ENCODE measurements at regions of chr4 and their contacts with region 1.

Region 1: GRCh38 chr4:78056265-78057129 is 626 bp upstream of the FRAS1 start:
- DNase-seq: peak; percentile 70 to 89 (median 82)
- ATAC-seq: peak; percentile 81 to 84 (median 82)
- H3K4me3 ChIP-seq: peak overlapping the region; percentile 49 to 82 (median 67)
- H3K27ac ChIP-seq: peak overlapping the region in 11 of 12 donors; percentile 19 to 91 (median 87)
- H3K4me1 ChIP-seq: peaks cover 0 to 29% (median 3%) of the 10 kb centered on the region in 12 donors
- H3K27me3 ChIP-seq: peaks cover 0 to 47% (median 0%) of the 10 kb centered on the region in 9 donors
- CTCF ChIP-seq: peak in 2 of 12 donors; percentile 12 to 19
- POLR2A ChIP-seq: peak in 1 of 2 donors; percentile 37

Region 2: DNA sequence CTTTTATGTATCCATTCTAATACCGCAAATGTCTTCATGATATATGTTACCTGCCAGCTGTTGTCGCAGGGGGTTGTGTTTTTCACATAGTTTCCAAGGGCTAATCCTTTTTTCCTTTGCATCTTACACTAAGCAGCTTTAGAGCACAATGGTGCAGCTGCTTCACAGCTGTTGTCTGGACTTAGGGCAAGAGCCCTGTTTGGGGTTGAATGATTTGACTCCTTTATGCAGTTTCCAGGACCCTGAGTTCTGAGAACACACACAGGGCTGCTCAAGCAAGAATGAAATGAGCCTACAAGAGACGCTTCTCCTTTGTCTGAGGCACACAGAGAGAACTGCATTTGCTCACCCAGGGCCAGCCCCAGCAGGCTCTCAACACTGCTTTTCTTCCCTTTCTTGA is 879.3 kb before region 1 on chr4:
- intact Hi-C with region 1: no loop called
- DNase-seq: no peak
- ATAC-seq: peak in 2 of 4 donors; percentile 29 to 48
- H3K4me3 ChIP-seq: no peak overlapping the region
- H3K27ac ChIP-seq: no peak overlapping the region
- H3K4me1 ChIP-seq: no peaks in the 10 kb centered on the region
- H3K27me3 ChIP-seq: no peaks in the 10 kb centered on the region
- CTCF ChIP-seq: no peak
- POLR2A ChIP-seq: no peak

Region 3: DNA sequence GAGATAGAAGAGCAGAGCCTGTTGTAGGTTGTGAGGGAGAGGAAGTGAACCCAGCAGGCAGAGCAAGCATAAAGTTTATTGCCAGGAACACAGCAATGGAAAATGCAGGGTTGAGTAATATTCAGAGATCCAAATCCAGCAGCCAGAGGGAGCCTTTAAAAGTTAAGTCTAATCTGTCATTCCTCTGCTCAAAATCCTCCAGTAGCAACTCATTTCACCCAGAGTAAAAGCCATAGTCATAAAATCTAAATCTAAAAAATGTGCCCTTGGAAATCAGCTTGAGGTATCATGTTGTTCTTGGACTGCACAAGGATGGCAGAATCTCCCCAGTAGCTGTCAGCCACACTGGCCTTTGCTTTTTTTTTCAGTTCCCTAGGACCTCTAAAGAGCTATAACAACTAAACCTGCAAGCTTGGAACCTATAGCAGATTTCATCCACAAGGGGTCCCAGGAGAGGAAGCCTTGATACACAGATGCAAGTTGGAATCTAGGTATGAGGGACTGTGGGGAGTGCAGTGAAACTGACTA is 62.2 kb before region 1 on chr4:
- intact Hi-C with region 1: loop called in 1 of 10 experiments (anchors 10 kb)
- DNase-seq: peak in 2 of 5 donors; percentile 10 to 24
- ATAC-seq: peak in 3 of 4 donors; percentile 70 to 75 (median 74)
- H3K4me3 ChIP-seq: no peak overlapping the region
- H3K27ac ChIP-seq: no peak overlapping the region
- H3K4me1 ChIP-seq: peaks cover 0 to 3% (median 0%) of the 10 kb centered on the region in 12 donors
- H3K27me3 ChIP-seq: no peaks in the 10 kb centered on the region
- CTCF ChIP-seq: peak; percentile 27 to 64 (median 46)
- POLR2A ChIP-seq: no peak

Region 4: GRCh38 chr4:78100060-78100459 is 43.6 kb after region 1 on chr4:
- intact Hi-C with region 1: loop called in 1 of 10 experiments (anchors 5 kb)
- DNase-seq: peak in 1 of 5 donors; percentile 10
- ATAC-seq: peak in 2 of 4 donors; percentile 41 to 55
- H3K4me3 ChIP-seq: no peak overlapping the region
- H3K27ac ChIP-seq: peak overlapping the region in 3 of 12 donors; percentile 17 to 37 (median 19)
- H3K4me1 ChIP-seq: peaks cover 0 to 20% (median 6%) of the 10 kb centered on the region in 12 donors
- H3K27me3 ChIP-seq: no peaks in the 10 kb centered on the region
- CTCF ChIP-seq: no peak
- POLR2A ChIP-seq: no peak

Region 5: GRCh38 chr4:78293821-78294301 is 237.4 kb after region 1 on chr4:
- intact Hi-C with region 1: loop called in 2 of 10 experiments (anchors 5 kb)
- DNase-seq: no peak
- ATAC-seq: peak in 3 of 4 donors; percentile 49 to 69 (median 62)
- H3K4me3 ChIP-seq: no peak overlapping the region
- H3K27ac ChIP-seq: no peak overlapping the region
- H3K4me1 ChIP-seq: peaks cover 0 to 14% (median 4%) of the 10 kb centered on the region in 12 donors
- H3K27me3 ChIP-seq: no peaks in the 10 kb centered on the region
- CTCF ChIP-seq: peak in 3 of 12 donors; percentile 14 to 17 (median 14)
- POLR2A ChIP-seq: no peak

Region 6: DNA sequence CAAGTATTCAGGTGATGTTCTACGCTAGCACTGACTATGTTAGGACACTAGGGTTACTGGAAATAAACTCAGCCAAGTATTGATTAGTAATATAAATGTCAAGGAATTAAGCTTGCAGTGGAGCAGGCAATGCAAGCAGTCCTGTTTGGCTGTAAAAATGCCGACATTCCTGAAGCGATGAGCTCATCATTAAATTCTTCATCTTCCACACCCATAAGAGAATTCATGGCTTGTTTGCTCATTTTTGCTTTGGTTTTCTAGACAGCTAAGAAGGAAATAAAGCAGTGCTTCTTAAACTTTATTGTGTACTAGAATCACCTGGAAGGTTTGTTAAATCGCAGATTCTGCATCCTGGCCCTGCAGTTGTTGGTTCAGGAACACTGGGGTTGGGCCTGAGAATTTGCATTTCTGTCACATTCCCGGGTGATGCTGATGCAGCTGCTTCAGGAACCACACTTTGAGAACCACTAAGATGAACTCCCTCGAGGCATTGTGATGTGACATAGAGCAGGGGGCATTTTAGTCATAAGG is 512.9 kb after region 1 on chr4:
- intact Hi-C with region 1: no loop called
- DNase-seq: no peak
- ATAC-seq: peak in 2 of 4 donors; percentile 65 to 81
- H3K4me3 ChIP-seq: peak overlapping the region in 3 of 12 donors; percentile 1 to 10 (median 1)
- H3K27ac ChIP-seq: peak overlapping the region in 11 of 12 donors; percentile 7 to 70 (median 63)
- H3K4me1 ChIP-seq: peaks cover 0 to 35% (median 15%) of the 10 kb centered on the region in 12 donors
- H3K27me3 ChIP-seq: no peaks in the 10 kb centered on the region
- CTCF ChIP-seq: no peak
- POLR2A ChIP-seq: no peak

Measured in heart left ventricle (tissue), 16 donors.